Endothelial cell of umbilical vein (primary cell): ENCODE measurements at regions of chr16 and their contacts with region 1.

Region 1: GRCh38 chr16:67399181-67399733 is 6.0 kb upstream of the TPPP3 start:
- DNase-seq: peak; percentile 47
- H3K4me3 ChIP-seq: no peak overlapping the region
- H3K27ac ChIP-seq: no peak overlapping the region
- H3K4me1 ChIP-seq: peaks cover 1% of the 10 kb centered on the region
- H3K27me3 ChIP-seq: peaks cover 5 to 6% of the 10 kb centered on the region in 2 experiments
- CTCF ChIP-seq: peak; percentile 88 to 96
- POLR2A ChIP-seq: no peak

Region 2: DNA sequence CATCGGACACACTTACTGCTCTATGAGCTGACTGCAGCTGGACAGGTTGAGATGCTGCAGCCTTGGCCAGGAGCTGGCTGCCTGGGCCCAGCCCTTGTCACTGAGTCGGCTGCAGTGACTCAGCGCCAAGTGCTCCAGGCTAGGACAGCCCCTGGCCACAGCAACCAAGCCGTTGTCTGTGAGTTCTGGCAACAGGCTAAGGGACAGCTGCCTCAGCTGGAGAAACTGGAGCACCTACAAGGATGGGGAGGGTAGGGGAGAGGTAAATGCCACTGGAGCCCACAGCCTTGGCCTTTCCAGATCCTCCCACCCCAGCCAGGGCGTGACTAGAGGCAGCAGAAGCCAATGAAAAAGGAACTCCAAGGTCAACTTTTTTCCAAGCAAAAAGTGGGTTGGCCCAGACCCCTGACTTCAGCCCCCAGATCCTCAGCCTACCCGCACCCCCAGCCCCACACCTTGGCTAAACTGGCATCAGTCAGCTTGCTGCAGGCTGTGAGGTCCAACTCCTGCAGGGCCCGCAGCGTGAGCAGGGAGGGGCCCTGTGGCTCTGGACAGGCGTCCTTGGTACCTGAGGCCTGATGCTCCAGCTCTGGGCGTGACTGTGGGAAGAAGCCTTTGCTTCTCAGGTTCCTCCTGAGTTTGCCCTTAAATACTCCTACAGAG is 191.3 kb before region 1 on chr16:
- CTCF ChIA-PET with region 1: no interaction called
- POLR2A ChIA-PET with region 1: no interaction called
- dilution Hi-C with region 1: no loop called
- intact Hi-C with region 1: no loop called
- DNase-seq: no peak
- H3K4me3 ChIP-seq: no peak overlapping the region
- H3K27ac ChIP-seq: no peak overlapping the region
- H3K4me1 ChIP-seq: peaks cover 1% of the 10 kb centered on the region
- H3K27me3 ChIP-seq: no peaks in the 10 kb centered on the region
- CTCF ChIP-seq: no peak
- POLR2A ChIP-seq: no peak

Region 3: GRCh38 chr16:67260426-67261075 is 138.7 kb before region 1 on chr16:
- CTCF ChIA-PET with region 1: interaction called, 65 read pairs
- POLR2A ChIA-PET with region 1: no interaction called
- dilution Hi-C with region 1: no loop called
- intact Hi-C with region 1: loop called (anchors 1 kb)
- DNase-seq: peak; percentile 24
- H3K4me3 ChIP-seq: no peak overlapping the region
- H3K27ac ChIP-seq: no peak overlapping the region
- H3K4me1 ChIP-seq: peaks cover 4% of the 10 kb centered on the region
- H3K27me3 ChIP-seq: no peaks in the 10 kb centered on the region
- CTCF ChIP-seq: peak; percentile 44 to 51
- POLR2A ChIP-seq: no peak

Region 4: DNA sequence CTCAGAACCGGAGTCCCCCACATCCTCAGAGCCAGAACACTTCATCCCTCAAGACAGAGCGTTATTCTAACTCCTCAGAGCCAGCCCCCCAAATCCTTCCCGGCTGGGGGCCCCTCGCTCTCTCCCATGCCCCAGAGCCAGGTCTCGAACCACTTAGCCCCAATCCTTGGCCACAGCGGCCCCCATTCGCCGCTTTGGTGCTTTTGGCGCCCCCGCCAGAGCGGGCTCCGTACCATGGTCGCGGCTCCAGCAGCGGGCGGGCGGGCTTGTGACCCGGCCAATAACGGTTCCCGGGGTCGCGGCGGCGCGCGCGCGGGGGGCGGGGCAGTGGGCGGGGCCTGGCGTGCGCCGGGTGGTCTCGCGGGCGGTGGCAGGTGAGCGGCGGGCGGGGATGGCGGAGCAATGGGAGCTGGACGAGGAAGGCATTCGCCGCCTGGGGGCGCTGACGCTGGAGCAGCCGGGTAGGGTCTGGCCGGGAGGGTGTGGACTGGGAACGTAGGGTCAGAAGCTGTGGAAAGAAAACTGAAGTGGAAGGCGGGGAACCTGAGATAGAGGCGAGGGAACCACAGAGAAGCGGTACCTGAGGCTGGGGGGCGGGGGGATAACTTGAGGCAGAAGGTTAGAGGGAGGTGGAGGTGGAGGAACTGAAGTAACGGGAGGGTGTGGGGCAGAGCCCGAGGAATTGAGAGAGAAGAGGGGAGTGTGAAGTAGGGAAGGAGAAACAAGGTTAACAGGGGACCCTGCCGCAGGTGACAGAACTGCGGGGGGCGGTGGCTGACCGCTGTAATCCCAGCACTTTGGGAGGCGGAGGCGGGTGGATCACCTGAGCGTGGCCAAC is 72.6 kb before region 1 on chr16 and contains the starts of genes KCTD19 and LRRC36:
- CTCF ChIA-PET with region 1: interaction called, 21 read pairs
- POLR2A ChIA-PET with region 1: no interaction called
- dilution Hi-C with region 1: no loop called
- intact Hi-C with region 1: no loop called
- DNase-seq: peak; percentile 71
- H3K4me3 ChIP-seq: peak within 1 kb of the TSS; percentile 54 to 87 (median 83)
- H3K27ac ChIP-seq: peak within 1 kb of the TSS; percentile 61
- H3K4me1 ChIP-seq: peaks cover 17% of the 10 kb centered on the region
- H3K27me3 ChIP-seq: peaks cover 10 to 15% of the 10 kb centered on the region in 2 experiments
- CTCF ChIP-seq: peak; percentile 68 to 76
- POLR2A ChIP-seq: no peak
- total RNA-seq, gene KCTD19: 0.16 and 0.44 TPM in 2 replicates
- total RNA-seq, gene LRRC36: 2.0 and 2.4 TPM in 2 replicates

Region 5: DNA sequence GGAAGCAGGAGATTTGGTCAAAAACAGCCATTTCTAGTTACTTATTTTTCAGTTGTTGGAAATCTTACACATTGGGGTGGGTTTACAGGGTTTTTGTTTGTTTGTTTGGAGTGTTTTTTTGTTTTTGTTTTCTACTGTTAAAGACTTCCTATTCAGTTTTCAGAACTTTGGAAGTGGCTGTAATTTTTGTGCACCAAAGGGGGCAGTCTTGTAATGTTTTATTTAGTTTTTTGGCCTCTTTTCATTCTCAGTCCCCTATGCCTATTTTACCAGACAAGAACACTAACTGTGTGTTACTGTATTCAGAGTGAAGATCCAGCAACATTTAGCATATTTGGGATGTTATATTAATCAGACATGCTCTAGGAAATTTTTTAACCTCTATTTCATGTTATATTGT is 26.6 kb before region 1 on chr16:
- CTCF ChIA-PET with region 1: interaction called, 21 read pairs
- POLR2A ChIA-PET with region 1: no interaction called
- dilution Hi-C with region 1: no loop called
- intact Hi-C with region 1: loop called (anchors 1 kb)
- DNase-seq: peak; percentile 40
- H3K4me3 ChIP-seq: no peak overlapping the region
- H3K27ac ChIP-seq: no peak overlapping the region
- H3K4me1 ChIP-seq: no peaks in the 10 kb centered on the region
- H3K27me3 ChIP-seq: peaks cover 3 to 17% of the 10 kb centered on the region in 2 experiments
- CTCF ChIP-seq: peak in 1 of 2 donors; percentile 39
- POLR2A ChIP-seq: no peak

Region 6: GRCh38 chr16:67415872-67416793 is 16.9 kb after region 1 on chr16 and contains the start of gene ZDHHC1:
- CTCF ChIA-PET with region 1: interaction called, 35 read pairs
- POLR2A ChIA-PET with region 1: no interaction called
- dilution Hi-C with region 1: no loop called
- intact Hi-C with region 1: no loop called
- DNase-seq: peak; percentile 72
- H3K4me3 ChIP-seq: peak within 1 kb of the TSS; percentile 76 to 84 (median 82)
- H3K27ac ChIP-seq: peak within 1 kb of the TSS; percentile 81
- H3K4me1 ChIP-seq: peaks cover 13% of the 10 kb centered on the region
- H3K27me3 ChIP-seq: no peaks in the 10 kb centered on the region
- CTCF ChIP-seq: peak; percentile 36 to 48
- POLR2A ChIP-seq: no peak
- total RNA-seq, gene ZDHHC1: 12.9 and 14.4 TPM in 2 replicates

Region 7: DNA sequence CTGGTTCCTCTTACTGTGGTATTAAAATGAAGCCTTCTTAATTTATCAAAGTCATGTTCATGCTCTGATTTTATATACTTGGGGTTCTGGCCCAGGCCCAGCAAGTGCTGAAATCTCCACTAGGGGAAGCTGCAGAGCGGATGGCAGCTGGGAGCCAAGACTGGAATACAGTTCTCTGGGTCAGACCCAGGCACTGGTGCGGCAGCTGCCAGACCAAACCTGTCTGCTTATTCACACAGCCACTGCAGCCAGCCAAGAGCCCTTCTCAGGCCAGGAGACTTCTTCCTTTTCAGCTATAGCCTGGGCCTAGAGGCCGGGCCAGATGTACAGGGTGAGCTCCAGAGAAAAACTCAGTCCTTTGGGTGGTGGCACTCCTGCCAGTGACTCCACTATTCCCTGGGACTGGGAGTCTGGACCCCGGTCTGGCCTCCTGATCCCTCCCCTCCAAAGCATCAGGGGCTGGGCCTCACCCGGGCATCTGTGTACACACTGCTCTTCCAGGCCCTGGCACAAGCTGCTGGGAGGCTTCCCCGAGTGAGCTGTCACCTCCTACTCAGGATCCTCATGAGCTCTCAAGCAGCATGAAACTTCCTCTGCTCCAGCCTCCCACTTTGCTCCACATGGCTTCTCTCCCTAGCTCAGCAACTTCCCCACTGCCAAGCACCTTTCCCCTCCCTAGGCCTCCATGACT is 57.3 kb after region 1 on chr16:
- CTCF ChIA-PET with region 1: no interaction called
- POLR2A ChIA-PET with region 1: no interaction called
- dilution Hi-C with region 1: no loop called
- intact Hi-C with region 1: no loop called
- DNase-seq: no peak
- H3K4me3 ChIP-seq: no peak overlapping the region
- H3K27ac ChIP-seq: no peak overlapping the region
- H3K4me1 ChIP-seq: peaks cover 13% of the 10 kb centered on the region
- H3K27me3 ChIP-seq: no peaks in the 10 kb centered on the region
- CTCF ChIP-seq: peak; percentile 17 to 34
- POLR2A ChIP-seq: no peak

Region 8: GRCh38 chr16:67537270-67537635 is 138.0 kb after region 1 on chr16:
- CTCF ChIA-PET with region 1: no interaction called
- POLR2A ChIA-PET with region 1: no interaction called
- dilution Hi-C with region 1: no loop called
- intact Hi-C with region 1: no loop called
- DNase-seq: peak; percentile 79
- H3K4me3 ChIP-seq: peak overlapping the region; percentile 73 to 89 (median 88)
- H3K27ac ChIP-seq: peak overlapping the region; percentile 93
- H3K4me1 ChIP-seq: peaks cover 24% of the 10 kb centered on the region
- H3K27me3 ChIP-seq: no peaks in the 10 kb centered on the region
- CTCF ChIP-seq: no peak
- POLR2A ChIP-seq: peak; percentile 80